Ovary (tissue), 10 donors: ENCODE measurements at regions of chr3 and their contacts with region 1.

Region 1: GRCh38 chr3:63762934-63763550 is 56.1 kb upstream of the C3orf49 start:
- DNase-seq: no peak
- H3K4me3 ChIP-seq: no peak overlapping the region
- H3K27ac ChIP-seq: no peak overlapping the region
- H3K4me1 ChIP-seq: no peaks in the 10 kb centered on the region
- H3K27me3 ChIP-seq: no peaks in the 10 kb centered on the region
- CTCF ChIP-seq: no peak
- EP300 ChIP-seq: no peak
- POLR2A ChIP-seq: no peak

Region 2: DNA sequence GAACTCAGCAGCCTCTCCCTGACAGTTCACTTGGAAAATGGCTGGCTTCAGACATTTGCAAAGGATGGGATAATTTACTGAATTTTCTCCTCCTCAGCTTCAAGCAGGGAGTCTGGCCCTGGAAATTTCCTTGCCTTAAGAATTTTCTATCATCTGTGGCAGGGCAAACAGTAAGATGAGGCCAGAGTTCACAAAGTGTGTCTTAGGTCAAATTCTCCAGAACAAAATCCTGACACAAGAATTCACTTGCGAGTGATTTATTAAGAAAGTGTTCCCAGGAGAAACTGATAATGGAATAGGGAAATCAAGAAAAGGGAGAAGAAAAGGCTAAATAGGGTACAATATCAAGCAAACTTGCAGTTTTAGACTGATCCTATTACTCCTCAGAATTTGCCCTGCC is 55.3 kb before region 1 on chr3:
- intact Hi-C with region 1: loop called in 1 of 4 experiments (anchors 1 kb)
- DNase-seq: no peak
- H3K4me3 ChIP-seq: no peak overlapping the region
- H3K27ac ChIP-seq: no peak overlapping the region
- H3K4me1 ChIP-seq: no peaks in the 10 kb centered on the region
- H3K27me3 ChIP-seq: no peaks in the 10 kb centered on the region
- CTCF ChIP-seq: no peak
- EP300 ChIP-seq: no peak
- POLR2A ChIP-seq: no peak

Region 3: GRCh38 chr3:63724987-63725386 is 38.1 kb before region 1 on chr3:
- intact Hi-C with region 1: loop called in 1 of 4 experiments (anchors 1 kb)
- DNase-seq: no peak
- H3K4me3 ChIP-seq: no peak overlapping the region
- H3K27ac ChIP-seq: no peak overlapping the region
- H3K4me1 ChIP-seq: no peaks in the 10 kb centered on the region
- H3K27me3 ChIP-seq: no peaks in the 10 kb centered on the region
- CTCF ChIP-seq: no peak
- EP300 ChIP-seq: no peak
- POLR2A ChIP-seq: no peak